ENCODE measurements at regions of chr3 and their contacts with region 1.

Region 1: DNA sequence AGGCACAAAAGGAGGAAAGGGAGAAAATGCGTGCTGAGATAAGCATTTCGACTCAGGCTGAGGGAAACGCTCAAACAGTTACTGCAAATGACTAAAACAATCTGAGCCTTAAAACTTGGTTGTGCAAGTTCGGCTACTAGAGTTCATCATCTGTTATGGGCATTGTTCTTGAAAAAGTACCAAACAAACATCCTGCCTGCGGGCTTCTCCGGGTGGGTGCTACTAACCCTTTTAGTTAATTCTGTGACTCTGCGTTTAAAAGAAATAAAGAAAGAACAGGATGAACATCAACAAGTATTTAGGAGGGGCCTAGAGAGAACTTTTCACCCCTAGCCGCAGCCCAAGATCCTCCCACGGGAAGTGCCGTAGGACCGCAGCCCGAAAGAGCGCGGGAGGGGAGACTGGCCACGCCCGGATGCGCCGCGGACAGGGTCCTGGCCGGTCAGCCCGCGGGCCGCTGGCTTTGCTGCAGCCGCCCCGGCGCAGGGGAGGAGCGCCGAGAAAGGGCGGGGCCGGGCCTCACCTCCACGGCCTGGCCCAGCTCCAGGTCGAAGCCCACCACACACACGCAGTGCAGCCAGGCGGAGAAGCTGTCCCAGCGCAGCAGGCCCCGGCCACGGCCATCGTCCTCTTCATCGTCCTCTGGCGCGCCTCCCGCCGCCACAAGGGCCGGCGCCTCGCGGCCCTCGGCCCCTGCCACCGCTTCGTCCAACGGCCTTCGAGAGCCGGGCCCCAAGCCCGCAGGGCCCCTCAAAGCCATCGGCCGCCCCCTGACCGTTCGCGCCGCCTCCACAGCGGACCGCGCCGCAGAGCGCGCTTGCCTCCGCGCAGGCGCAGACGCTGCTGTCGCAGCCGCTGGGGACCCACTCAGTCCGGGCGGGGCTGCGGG is at the start of gene DENND6A:
- H3K4me3 Mint-ChIP-seq: peak within 1 kb of the TSS; percentile 79
- H3K27ac Mint-ChIP-seq: peak within 1 kb of the TSS; percentile 82
- H3K4me1 Mint-ChIP-seq: peaks cover 35% of the 10 kb centered on the region
- H3K27me3 Mint-ChIP-seq: no peaks in the 10 kb centered on the region

Region 2: DNA sequence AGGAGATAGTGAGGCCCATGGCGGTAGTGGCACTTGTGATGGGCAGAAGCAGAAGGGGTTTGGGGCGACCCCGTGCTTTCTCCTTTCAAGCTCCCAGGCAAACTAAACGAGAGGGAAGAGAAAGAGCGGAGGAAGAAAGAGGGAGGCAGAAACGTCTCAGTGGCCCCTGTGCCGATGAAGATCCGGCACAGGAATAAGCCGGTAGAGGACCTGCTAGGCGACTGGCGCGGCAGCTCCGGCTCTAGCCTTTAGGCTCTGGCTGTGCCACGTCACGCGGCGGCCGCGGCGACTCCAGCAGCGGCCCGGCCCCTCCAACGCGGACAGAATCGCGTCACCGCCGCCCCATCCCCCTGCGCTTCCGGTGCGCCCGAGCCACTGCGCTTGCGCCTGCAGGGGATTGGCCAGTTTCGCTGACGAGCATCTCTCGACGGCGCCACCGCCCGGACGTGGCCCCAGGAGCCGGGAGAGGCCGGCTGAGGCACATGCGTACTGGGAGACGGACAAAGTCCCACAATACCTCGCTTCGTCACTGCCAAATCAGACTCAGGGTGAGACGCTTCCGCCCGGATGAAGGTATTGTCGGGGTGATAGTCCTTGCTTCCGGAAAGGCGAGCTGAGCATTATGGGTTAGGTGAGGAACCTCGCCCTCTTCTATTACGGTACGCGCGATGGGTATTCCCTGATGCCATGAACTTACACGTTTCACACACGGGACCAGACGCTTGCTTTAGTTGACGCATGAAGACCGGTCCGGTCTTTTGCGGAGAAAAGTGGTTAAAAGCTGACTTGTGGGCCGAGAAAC is 95.2 kb before region 1 on chr3 and contains the start of gene ARF4:
- intact Hi-C with region 1: loop called (anchors 2 kb)
- H3K4me3 Mint-ChIP-seq: peak within 1 kb of the TSS; percentile 86
- H3K27ac Mint-ChIP-seq: peak within 1 kb of the TSS; percentile 92
- H3K4me1 Mint-ChIP-seq: peaks cover 38% of the 10 kb centered on the region
- H3K27me3 Mint-ChIP-seq: no peaks in the 10 kb centered on the region

Region 3: DNA sequence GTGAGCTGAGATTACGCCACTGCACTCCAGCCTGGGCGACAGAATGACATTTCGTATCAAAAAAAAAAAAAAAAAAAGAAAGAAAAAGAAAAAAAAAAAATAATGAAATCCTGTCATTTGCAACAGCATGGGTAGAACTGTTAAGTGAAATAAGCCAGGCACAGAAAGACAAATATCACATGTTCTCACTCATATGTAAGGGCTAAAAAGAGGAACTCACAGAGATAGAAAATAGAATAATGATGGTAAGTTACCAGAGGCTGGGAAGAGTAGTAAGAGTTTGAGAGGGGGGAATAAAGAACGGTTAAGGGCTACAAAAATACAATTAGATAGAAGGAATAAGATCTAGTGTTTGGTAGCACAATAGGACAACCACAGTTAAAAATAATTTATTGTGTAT is 19.3 kb before region 1 on chr3:
- intact Hi-C with region 1: loop called (anchors 2 kb)
- H3K4me3 Mint-ChIP-seq: no peak overlapping the region
- H3K27ac Mint-ChIP-seq: peak overlapping the region; percentile 76
- H3K4me1 Mint-ChIP-seq: peaks cover 46% of the 10 kb centered on the region
- H3K27me3 Mint-ChIP-seq: no peaks in the 10 kb centered on the region

Region 4: DNA sequence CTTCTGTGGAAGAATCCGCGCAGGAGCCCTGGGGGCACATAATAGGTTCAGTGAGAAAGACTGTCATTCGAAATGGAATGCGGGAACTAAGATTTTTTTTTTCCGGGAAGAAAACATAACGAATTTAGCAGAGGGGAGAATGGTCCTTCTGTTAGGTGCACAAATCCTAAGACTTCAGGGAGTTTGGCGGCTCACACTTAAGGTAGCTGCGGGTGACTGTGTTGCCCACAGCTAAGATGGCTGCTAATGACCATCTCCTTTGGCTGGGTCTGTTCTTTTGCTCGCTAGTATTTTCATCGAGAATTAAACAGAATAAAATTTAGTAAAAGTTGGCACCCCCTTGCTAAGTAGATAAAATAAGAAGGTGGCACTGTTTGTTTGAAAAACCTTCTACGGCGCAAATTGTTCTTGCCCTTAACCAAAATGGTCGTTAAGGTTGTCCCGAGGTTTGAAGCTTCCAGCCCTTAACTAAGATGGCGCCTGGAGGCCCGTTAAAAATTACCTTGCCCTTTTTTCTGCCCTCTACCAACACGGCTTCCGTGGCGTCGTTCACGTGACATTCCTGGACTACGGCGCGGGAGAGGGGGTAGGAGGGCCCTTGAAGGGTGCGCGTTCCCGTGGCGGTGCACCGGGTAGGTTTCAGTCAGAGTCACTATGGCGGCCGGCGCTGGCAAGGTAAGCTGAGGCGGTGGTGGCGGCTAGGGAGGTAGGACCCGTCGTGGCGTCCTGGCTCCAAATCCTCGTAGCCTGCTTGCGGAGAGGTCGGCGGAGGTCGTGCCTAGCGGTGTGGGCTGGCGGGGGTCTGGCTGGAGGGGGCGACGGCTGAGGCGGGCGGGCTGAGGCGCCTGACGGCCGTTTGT is 63.4 kb after region 1 on chr3 and contains the start of gene SLMAP:
- intact Hi-C with region 1: loop called (anchors 1 kb)
- H3K4me3 Mint-ChIP-seq: peak within 1 kb of the TSS; percentile 95
- H3K27ac Mint-ChIP-seq: peak within 1 kb of the TSS; percentile 89
- H3K4me1 Mint-ChIP-seq: peaks cover 33% of the 10 kb centered on the region
- H3K27me3 Mint-ChIP-seq: no peaks in the 10 kb centered on the region